A549 (cell line): ENCODE measurements at regions of chr1 and their contacts with region 1.

Region 1: GRCh38 chr1:156356875-156357534 is 12.0 kb upstream of the RHBG start:
- DNase-seq: peak; percentile 63 to 83
- ATAC-seq: peak; percentile 93 to 94
- H3K4me3 ChIP-seq: no peak overlapping the region; the same call in 2 of the 3 replicates
- H3K27ac ChIP-seq: no peak overlapping the region; a peak in 1 of 6 replicates
- H3K4me1 ChIP-seq: no peaks in the 10 kb centered on the region; the same call in 2 of the 3 replicates
- CTCF ChIP-seq: peak; percentile 82
- EP300 ChIP-seq: no peak
- POLR2A ChIP-seq: no peak
- RAD21 ChIP-seq: peak; percentile 61 to 66

Region 2: DNA sequence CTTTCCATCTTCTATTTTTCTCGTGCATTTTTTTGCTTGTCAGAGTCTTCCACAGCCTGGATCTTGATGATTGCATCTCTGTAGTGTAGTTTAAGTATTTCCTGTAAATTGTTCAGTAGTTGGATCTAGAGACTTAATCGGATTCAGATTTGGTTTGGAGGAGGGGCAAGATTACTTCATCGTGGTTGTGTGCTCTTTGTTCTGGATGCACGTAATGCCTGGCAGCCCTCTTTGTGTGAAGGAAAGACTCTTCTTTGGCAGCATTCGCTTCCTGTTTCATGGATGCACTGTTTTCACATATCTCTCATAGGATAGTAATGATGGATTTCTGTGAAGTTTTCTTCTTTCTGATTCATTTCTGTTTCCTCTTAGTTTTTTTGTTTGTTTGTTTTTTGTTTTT is 189.5 kb before region 1 on chr1:
- CTCF ChIA-PET with region 1: no interaction called
- POLR2A ChIA-PET with region 1: no interaction called
- DNase-seq: no peak
- ATAC-seq: no peak
- H3K4me3 ChIP-seq: no peak overlapping the region
- H3K27ac ChIP-seq: no peak overlapping the region
- H3K4me1 ChIP-seq: no peaks in the 10 kb centered on the region
- CTCF ChIP-seq: no peak
- EP300 ChIP-seq: no peak
- POLR2A ChIP-seq: no peak
- RAD21 ChIP-seq: no peak

Region 3: DNA sequence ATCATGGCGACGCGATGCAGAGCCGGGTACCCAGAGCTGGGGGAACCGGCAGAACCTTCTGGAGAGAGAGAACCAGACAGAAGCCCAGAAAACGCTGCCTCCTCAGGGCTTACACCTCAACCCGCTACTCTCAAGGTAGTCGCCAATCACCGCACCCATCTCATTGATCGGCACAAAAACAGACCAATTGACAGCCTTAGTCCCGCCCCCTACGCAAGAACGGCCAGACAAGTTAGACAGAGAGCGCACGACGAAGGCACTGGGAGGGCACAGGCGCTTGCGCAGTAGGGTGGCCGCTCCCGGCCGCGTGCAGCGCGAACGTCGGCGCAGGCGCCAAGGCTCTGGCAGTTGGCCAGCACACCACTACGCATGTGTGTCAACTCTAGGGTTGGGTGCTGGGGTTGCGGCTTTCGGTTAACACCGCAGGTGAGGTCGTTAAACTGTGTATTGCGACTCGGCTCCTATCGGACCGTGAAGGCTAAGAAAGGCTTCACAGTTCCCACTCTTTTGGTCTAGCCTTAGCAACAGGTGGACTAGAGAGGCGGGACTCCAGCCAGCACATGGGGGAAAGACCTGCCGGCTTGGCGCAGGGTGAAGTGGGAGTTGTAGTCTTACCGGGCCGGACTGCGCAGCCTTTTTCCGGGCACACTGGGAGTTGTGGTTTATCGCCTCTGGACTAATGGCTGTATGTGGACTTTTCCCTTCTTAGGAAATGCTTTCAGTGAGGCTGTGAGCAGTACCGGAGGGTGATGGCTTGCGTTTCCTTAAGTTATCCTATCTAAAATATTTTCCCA is 18.6 kb before region 1 on chr1 and contains the starts of genes CCT3 and TSACC:
- CTCF ChIA-PET with region 1: interaction called, 13 read pairs
- POLR2A ChIA-PET with region 1: no interaction called
- DNase-seq: peak; percentile 99 to 100
- ATAC-seq: peak; percentile 94 to 95
- H3K4me3 ChIP-seq: peak within 1 kb of the TSS; percentile 75
- H3K27ac ChIP-seq: peak within 1 kb of the TSS; percentile 89 to 95
- H3K4me1 ChIP-seq: peaks cover 16% of the 10 kb centered on the region; the same call in 2 of the 3 replicates
- CTCF ChIP-seq: no peak
- EP300 ChIP-seq: no peak
- POLR2A ChIP-seq: peak; percentile 87
- RAD21 ChIP-seq: no peak
- polyA plus RNA-seq, gene CCT3: 528 and 530 TPM in 2 replicates
- polyA plus RNA-seq, gene TSACC: 3.9 and 4.7 TPM in 2 replicates

Region 4: GRCh38 chr1:156346636-156347035 is 10.4 kb before region 1 on chr1:
- CTCF ChIA-PET with region 1: interaction called, 16 read pairs
- POLR2A ChIA-PET with region 1: no interaction called
- DNase-seq: no peak
- ATAC-seq: no peak
- H3K4me3 ChIP-seq: no peak overlapping the region
- H3K27ac ChIP-seq: no peak overlapping the region
- H3K4me1 ChIP-seq: no peaks in the 10 kb centered on the region
- CTCF ChIP-seq: no peak
- EP300 ChIP-seq: no peak
- POLR2A ChIP-seq: no peak
- RAD21 ChIP-seq: no peak

Region 5: DNA sequence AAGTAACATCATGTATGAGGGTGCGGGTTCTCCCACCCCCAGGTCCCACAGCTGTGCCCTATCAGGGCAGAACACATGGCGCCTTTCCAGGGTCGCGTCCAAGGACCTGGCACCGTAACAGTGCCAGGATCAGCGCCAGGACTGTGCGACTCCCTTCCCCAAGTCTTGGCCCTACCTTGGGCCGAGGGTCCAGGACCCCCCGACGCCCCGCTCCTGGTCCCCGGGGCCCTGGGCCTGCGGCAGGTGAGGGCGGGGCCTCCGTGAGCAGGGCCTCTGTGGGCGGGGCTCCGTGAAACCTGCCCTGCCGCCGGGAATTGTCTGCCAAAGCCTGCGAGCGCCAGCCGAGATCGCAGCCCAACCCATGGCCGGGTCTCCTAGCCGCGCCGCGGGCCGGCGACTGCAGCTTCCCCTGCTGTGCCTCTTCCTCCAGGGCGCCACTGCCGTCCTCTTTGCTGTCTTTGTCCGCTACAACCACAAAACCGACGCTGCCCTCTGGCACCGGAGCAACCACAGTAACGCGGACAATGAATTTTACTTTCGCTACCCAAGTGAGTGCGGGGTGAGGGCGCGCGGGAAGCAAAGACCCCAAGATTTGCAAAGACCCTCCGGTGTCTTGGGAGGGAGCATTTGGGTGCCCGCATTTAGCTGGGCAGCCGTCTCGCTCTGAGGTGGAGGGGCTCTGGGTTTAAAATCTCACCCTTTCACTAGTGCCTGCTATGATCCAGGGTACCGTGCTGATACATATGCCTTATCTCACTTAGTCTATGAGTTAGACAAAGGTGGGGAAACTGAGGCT is 12.1 kb after region 1 on chr1 and contains the start of gene RHBG:
- CTCF ChIA-PET with region 1: interaction called, 30 read pairs
- POLR2A ChIA-PET with region 1: no interaction called
- DNase-seq: no peak
- ATAC-seq: peak in 1 of 2 experiments; percentile 42; a peak in 3 of 6 replicates
- H3K4me3 ChIP-seq: peak within 1 kb of the TSS; percentile 32; the same call in 2 of the 3 replicates
- H3K27ac ChIP-seq: peak within 1 kb of the TSS in 1 of 2 experiments; percentile 62; a peak in 3 of 6 replicates
- H3K4me1 ChIP-seq: peaks cover 28% of the 10 kb centered on the region
- CTCF ChIP-seq: no peak
- EP300 ChIP-seq: no peak
- POLR2A ChIP-seq: no peak
- RAD21 ChIP-seq: no peak
- polyA plus RNA-seq, gene RHBG: 0.04 and 0.06 TPM in 2 replicates